A549 (cell line): ENCODE measurements at regions of chr20 and their contacts with region 1.

Region 1: GRCh38 chr20:63980806-63981728 is at the start of gene PRPF6:
- DNase-seq: peak; percentile 92 to 97
- ATAC-seq: peak; percentile 84 to 87
- H3K4me3 ChIP-seq: peak within 1 kb of the TSS; percentile 93
- H3K27ac ChIP-seq: peak within 1 kb of the TSS; percentile 94 to 95
- H3K4me1 ChIP-seq: peaks cover 34% of the 10 kb centered on the region
- CTCF ChIP-seq: peak; percentile 86
- EP300 ChIP-seq: no peak
- POLR2A ChIP-seq: peak; percentile 68
- RAD21 ChIP-seq: peak; percentile 30 to 51; a peak in 4 of 5 replicates
- polyA plus RNA-seq, gene PRPF6: 42.8 and 47.5 TPM in 2 replicates

Region 2: DNA sequence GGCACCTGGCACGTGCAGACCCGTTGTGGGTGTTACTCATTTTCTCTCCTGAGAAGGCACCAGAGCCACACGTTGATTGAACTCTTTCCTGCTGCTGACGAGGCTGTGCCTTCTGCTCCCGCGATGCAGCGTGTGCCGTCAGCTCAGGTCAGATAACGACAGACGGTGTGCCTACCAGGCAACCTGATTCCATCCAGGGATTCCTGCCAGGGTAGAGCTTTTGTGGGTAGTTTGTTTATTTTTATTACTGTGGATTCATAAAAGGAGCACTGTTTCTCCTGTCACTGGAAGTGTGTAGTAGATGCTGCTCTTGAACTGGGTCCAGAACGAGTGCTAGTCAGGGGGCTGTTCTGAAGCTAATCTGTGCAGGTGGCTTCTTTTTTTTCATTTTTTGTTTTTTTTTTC is 20.5 kb after region 1 on chr20:
- CTCF ChIA-PET with region 1: interaction called, 10 read pairs
- POLR2A ChIA-PET with region 1: interaction called, 4 read pairs
- DNase-seq: no peak
- ATAC-seq: no peak
- H3K4me3 ChIP-seq: no peak overlapping the region
- H3K27ac ChIP-seq: no peak overlapping the region
- H3K4me1 ChIP-seq: no peaks in the 10 kb centered on the region
- CTCF ChIP-seq: no peak
- EP300 ChIP-seq: no peak
- POLR2A ChIP-seq: no peak
- RAD21 ChIP-seq: no peak

Region 3: DNA sequence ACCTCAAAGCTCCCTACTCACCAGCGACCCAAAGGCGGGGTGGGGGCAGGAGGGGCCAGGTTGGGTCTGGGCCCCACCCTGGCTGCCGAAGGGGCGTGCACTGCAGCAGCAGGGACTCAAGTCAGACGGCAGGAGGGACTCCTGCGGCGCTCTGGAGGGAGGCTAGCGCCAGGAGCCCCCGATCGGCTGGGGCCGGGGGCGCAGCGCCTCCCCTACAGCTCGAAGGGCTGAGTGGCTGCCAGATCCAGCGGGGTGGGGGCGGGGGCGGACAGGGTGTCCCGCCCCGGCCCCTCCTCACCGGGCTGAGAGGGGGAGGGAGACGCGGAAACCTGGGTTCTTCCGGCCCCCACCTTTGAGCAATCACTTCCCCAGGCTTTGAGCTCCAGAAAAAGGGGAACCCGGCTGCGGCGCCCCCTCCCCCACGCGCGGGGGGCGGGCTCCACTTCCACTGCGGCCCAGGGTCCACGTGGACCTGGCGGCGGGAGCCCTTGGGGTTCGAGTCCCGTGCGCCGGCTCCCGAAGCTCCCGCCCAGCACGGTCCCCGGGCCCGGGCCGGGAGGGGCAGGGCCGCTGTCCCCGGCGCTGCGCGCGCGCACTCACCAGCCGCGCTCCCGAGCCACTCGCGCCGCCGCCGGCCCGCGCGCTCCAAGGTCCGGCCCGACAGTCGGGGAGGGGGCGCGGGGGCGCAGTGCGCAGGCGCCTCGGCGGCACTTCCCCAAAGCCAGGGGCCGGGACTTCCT is 98.4 kb after region 1 on chr20 and contains the start of gene RGS19:
- CTCF ChIA-PET with region 1: interaction called, 5 read pairs
- POLR2A ChIA-PET with region 1: interaction called, 12 read pairs
- DNase-seq: peak in 1 of 2 experiments; percentile 72
- ATAC-seq: peak; percentile 15 to 49; a peak in 5 of 6 replicates
- H3K4me3 ChIP-seq: peak within 1 kb of the TSS; percentile 89
- H3K27ac ChIP-seq: peak within 1 kb of the TSS; percentile 93 to 96
- H3K4me1 ChIP-seq: peaks cover 27% of the 10 kb centered on the region
- CTCF ChIP-seq: no peak
- EP300 ChIP-seq: no peak
- POLR2A ChIP-seq: peak; percentile 25; the same call in 1 of the 2 replicates
- RAD21 ChIP-seq: no peak
- polyA plus RNA-seq, gene RGS19: 12.3 and 13.8 TPM in 2 replicates